ENCODE measurements at regions of chr1 and their contacts with region 1.

Region 1: GRCh38 chr1:63537940-63538339 is 14.6 kb downstream of the EFCAB7 start:
- DNase-seq: no peak
- H3K4me3 Mint-ChIP-seq: no peak overlapping the region
- H3K27ac Mint-ChIP-seq: no peak overlapping the region
- H3K4me1 Mint-ChIP-seq: no peaks in the 10 kb centered on the region
- H3K27me3 Mint-ChIP-seq: no peaks in the 10 kb centered on the region

Region 2: DNA sequence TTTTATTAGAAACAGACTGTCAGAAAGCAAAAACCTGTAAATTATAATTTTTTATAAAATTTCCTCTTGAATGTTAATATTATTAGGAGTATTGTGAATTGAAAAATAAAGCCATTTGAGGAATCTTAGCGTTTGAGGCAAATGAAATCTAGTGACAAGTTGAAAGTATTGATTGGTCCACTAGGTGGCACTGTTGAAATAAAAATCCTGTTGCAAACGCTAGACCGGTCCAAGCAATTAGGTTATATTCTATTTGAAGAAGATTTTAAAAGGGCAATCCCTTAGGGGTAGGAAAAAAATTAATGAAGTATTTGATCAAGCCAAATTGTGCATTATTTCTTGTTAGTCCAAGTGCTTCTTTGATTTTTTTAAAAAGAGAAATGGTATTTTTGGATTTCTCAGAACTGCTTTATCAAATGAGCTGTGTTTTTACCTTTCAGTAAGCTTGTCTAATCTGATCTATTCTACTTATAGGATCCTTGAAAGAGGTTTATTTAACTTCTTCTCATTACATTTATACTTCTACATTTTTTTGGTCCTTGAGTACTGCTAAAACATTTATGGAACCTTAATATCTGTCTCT is 696.3 kb before region 1 on chr1:
- CTCF ChIA-PET with region 1: interaction called, 25 read pairs
- POLR2A ChIA-PET with region 1: no interaction called
- intact Hi-C with region 1: no loop called
- DNase-seq: no peak
- H3K4me3 Mint-ChIP-seq: no peak overlapping the region
- H3K27ac Mint-ChIP-seq: no peak overlapping the region
- H3K4me1 Mint-ChIP-seq: no peaks in the 10 kb centered on the region
- H3K27me3 Mint-ChIP-seq: no peaks in the 10 kb centered on the region

Region 3: GRCh38 chr1:62964141-62964540 is 573.8 kb before region 1 on chr1:
- CTCF ChIA-PET with region 1: no interaction called
- POLR2A ChIA-PET with region 1: no interaction called
- intact Hi-C with region 1: loop called (anchors 5 kb)
- DNase-seq: no peak
- H3K4me3 Mint-ChIP-seq: no peak overlapping the region
- H3K27ac Mint-ChIP-seq: no peak overlapping the region
- H3K4me1 Mint-ChIP-seq: no peaks in the 10 kb centered on the region
- H3K27me3 Mint-ChIP-seq: peaks cover 6% of the 10 kb centered on the region

Region 4: GRCh38 chr1:63327417-63328139 is 210.4 kb before region 1 on chr1:
- CTCF ChIA-PET with region 1: interaction called, 9 read pairs
- POLR2A ChIA-PET with region 1: no interaction called
- intact Hi-C with region 1: loop called (anchors 5 kb)
- DNase-seq: peak; percentile 76
- H3K4me3 Mint-ChIP-seq: peak overlapping the region; percentile 11
- H3K27ac Mint-ChIP-seq: no peak overlapping the region
- H3K4me1 Mint-ChIP-seq: peaks cover 22% of the 10 kb centered on the region
- H3K27me3 Mint-ChIP-seq: peaks cover 68% of the 10 kb centered on the region

Region 5: DNA sequence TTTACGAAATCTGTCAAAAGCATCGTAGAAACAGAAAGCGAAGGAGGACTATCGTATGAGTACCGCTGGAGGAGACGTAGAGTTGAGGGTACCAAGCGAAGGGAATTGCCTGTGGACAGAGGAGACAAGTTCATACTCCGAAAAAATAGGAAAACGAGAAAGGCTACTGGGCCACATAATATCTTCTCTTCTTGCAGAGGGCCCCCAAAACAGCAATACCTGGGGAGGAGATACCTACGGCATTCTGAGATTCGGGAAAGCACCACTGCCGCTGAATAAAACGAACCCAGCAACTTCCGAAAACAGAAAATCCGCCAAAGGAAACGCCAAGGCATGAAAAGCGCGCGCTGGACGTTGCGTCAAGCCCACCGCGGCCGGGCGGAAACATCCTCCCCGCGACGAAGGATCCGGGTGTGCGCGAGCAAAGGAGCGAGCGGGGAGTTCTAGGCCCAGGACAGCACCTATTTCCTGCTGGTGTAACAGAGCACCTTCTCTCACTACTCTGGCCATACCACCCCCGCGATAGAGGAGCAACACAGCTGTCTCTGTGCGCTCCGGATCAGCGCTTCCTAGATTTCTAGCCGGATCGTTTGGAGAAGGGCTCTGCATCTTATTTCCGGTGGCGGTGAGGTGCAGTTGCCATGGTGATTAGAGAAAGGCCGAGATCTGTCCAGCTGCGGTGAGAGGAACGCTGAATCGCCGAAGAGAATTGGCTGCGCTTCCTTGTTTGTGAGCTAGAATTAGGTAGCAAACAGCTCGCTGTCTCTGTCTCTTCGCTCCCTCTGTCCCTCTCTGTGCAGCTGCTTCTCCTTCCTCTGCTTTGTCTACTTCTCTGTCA is 14.8 kb before region 1 on chr1 and contains the starts of genes EFCAB7 and ITGB3BP:
- CTCF ChIA-PET with region 1: no interaction called
- POLR2A ChIA-PET with region 1: no interaction called
- intact Hi-C with region 1: no loop called
- DNase-seq: peak; percentile 89
- H3K4me3 Mint-ChIP-seq: peak within 1 kb of the TSS; percentile 94
- H3K27ac Mint-ChIP-seq: peak within 1 kb of the TSS; percentile 94
- H3K4me1 Mint-ChIP-seq: peaks cover 27% of the 10 kb centered on the region
- H3K27me3 Mint-ChIP-seq: no peaks in the 10 kb centered on the region
- total RNA-seq, gene EFCAB7: 5.6 to 5.8 TPM
- total RNA-seq, gene ITGB3BP: 59.5 to 61.1 TPM

Measured in activated CD4-positive, alpha-beta memory T cell treated with anti-CD3 and anti-CD28 coated beads for 36 hours (primary cell).